Esophagus squamous epithelium (tissue), 5 donors: ENCODE measurements at regions of chr10 and their contacts with region 1.

Region 1: GRCh38 chr10:120735773-120736371 is 115.3 kb upstream of the WDR11 start:
- DNase-seq: no peak
- H3K4me3 ChIP-seq: no peak overlapping the region
- H3K27ac ChIP-seq: no peak overlapping the region
- H3K4me1 ChIP-seq: no peaks in the 10 kb centered on the region
- H3K27me3 ChIP-seq: peaks cover 0 to 4% (median 0%) of the 10 kb centered on the region in 4 donors
- CTCF ChIP-seq: peak; percentile 35 to 77 (median 54)
- POLR2A ChIP-seq: no peak

Region 2: DNA sequence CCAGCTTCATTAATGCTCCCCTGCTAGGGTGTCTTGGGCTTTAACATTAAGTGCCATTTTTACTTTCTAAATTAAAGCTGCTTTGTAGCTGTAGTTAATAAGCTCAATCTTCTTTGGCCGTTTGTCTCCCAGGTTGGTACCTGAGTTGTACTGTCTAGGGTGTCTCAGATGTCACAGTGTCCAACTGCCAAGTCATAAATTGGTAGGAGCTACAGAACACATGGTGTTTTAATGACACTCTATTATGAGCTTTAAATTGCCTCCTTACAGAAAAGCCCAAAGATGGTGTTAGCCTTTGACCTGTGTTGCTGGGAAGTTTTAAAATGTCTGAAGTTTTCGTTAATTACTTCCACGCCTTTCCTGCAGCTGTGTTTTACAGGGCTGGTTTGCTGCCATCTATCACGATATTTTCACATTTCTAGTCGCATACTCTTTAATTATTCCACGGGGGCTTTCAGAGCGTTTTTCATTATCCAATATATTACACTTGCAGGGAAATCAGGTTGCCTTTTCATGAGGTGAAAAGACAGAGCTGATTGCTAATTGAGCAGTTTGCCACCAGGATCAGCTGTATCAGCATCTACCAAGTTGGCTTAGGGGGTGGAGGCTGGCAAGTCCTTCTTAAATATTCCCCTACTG is 526.6 kb before region 1 on chr10:
- intact Hi-C with region 1: no loop called
- DNase-seq: no peak
- H3K4me3 ChIP-seq: no peak overlapping the region
- H3K27ac ChIP-seq: no peak overlapping the region
- H3K4me1 ChIP-seq: peaks cover 0 to 19% (median 0%) of the 10 kb centered on the region in 3 donors
- H3K27me3 ChIP-seq: no peaks in the 10 kb centered on the region
- CTCF ChIP-seq: no peak
- POLR2A ChIP-seq: no peak

Region 3: DNA sequence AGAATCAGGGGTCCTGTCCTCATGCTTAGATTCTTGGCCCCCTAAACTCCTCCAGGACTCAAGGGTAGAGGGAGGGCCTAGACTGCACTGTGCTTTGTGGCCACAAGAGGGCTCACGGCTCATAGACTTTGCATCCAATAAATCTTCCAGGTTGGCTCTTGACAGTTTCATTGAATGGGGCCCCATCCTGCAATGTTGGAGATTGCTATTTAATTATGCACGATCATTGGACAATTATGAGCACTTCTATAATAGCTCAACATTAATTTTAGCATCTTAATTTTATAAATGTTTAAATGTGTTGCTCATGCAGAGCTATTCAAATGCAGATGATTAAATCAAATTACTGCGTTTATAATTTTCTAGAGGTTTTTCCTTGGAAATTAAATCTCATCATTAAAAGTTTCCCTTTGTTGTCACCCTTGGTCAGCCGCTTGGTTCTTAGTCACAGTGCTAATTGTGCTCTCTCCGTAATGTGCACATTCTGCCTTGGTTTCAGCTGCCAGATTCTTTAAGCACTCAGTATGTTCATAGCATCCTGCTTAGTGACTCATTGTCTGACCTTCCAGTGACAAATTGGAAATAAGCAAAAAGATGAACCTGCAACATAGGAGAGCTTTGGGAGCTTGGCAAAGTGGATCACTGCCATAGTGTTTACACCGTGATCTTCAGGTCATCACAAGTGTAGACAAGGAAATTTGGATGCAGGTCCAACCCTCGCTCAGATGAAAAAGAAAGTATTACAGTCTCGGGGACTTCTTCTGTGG is 312.3 kb before region 1 on chr10:
- intact Hi-C with region 1: loop called (anchors 10 kb)
- DNase-seq: no peak
- H3K4me3 ChIP-seq: no peak overlapping the region
- H3K27ac ChIP-seq: no peak overlapping the region
- H3K4me1 ChIP-seq: no peaks in the 10 kb centered on the region
- H3K27me3 ChIP-seq: peaks cover 0 to 8% (median 0%) of the 10 kb centered on the region in 4 donors
- CTCF ChIP-seq: peak; percentile 23 to 82 (median 77)
- POLR2A ChIP-seq: no peak

Region 4: GRCh38 chr10:120873734-120874133 is 137.9 kb after region 1 on chr10:
- intact Hi-C with region 1: no loop called
- DNase-seq: no peak
- H3K4me3 ChIP-seq: no peak overlapping the region
- H3K27ac ChIP-seq: no peak overlapping the region
- H3K4me1 ChIP-seq: no peaks in the 10 kb centered on the region
- H3K27me3 ChIP-seq: no peaks in the 10 kb centered on the region
- CTCF ChIP-seq: no peak
- POLR2A ChIP-seq: no peak